CD8-positive, alpha-beta T cell (primary cell): ENCODE measurements at regions of chr12 and their contacts with region 1.

Region 1: GRCh38 chr12:95318071-95318545 is 100.5 kb downstream of the VEZT start:
- DNase-seq: no peak
- ATAC-seq: no peak
- H3K4me3 ChIP-seq: no peak overlapping the region
- H3K4me3 Mint-ChIP-seq: no peak overlapping the region
- H3K27ac ChIP-seq: no peak overlapping the region
- H3K27ac Mint-ChIP-seq: no peak overlapping the region
- H3K4me1 ChIP-seq: no peaks in the 10 kb centered on the region
- H3K4me1 Mint-ChIP-seq: no peaks in the 10 kb centered on the region
- H3K27me3 ChIP-seq: no peaks in the 10 kb centered on the region
- H3K27me3 Mint-ChIP-seq: peaks cover 10% of the 10 kb centered on the region
- CTCF ChIP-seq: no peak

Region 2: DNA sequence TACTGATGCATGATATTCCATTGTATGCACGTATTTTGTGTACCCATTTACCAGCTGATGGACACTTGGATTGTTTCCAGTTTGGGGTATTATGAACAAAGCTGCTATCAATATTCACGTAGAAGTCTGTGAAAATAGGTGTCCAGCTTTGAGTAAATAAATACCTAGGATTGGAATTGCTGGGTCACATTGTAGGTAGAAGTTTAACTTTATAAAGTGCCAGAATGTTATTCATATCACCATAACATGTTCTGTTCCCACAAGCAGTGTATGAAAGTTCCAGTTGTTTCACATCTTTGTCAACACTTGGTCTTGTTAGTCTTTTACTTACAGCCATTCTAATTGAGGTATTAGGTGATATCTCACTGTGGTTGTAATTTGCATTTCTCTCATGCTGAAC is 47.8 kb after region 1 on chr12:
- CTCF ChIA-PET with region 1: no interaction called
- POLR2A ChIA-PET with region 1: no interaction called
- intact Hi-C with region 1: loop called in 1 of 2 experiments (anchors 2 kb)
- DNase-seq: no peak
- ATAC-seq: no peak
- H3K4me3 ChIP-seq: no peak overlapping the region
- H3K4me3 Mint-ChIP-seq: no peak overlapping the region
- H3K27ac ChIP-seq: no peak overlapping the region
- H3K27ac Mint-ChIP-seq: no peak overlapping the region
- H3K4me1 ChIP-seq: no peaks in the 10 kb centered on the region
- H3K4me1 Mint-ChIP-seq: no peaks in the 10 kb centered on the region
- H3K27me3 ChIP-seq: no peaks in the 10 kb centered on the region
- H3K27me3 Mint-ChIP-seq: peaks cover 3% of the 10 kb centered on the region
- CTCF ChIP-seq: no peak

Region 3: DNA sequence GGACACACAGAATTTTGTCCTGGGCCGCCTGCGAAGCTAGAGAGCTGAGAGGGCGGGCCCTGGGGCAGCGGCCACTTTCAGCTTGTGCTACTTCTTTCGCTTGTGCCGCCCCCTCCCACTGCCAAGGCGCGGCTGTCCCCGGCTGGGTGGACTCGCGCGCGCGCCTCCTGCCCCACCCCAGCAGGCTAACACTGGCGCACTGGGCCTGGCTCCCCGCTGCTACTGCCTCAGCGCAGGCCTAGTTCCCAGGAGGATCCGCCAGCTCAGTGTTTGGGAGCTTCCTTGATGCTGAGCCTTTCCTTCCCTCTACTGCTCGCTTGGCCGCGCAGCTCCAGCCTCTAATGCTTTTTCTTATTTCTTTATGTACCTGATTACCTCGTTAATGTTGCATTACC is 128.4 kb after region 1 on chr12:
- CTCF ChIA-PET with region 1: no interaction called
- POLR2A ChIA-PET with region 1: no interaction called
- intact Hi-C with region 1: no loop called
- DNase-seq: no peak
- ATAC-seq: no peak
- H3K4me3 ChIP-seq: no peak overlapping the region
- H3K4me3 Mint-ChIP-seq: no peak overlapping the region
- H3K27ac ChIP-seq: no peak overlapping the region
- H3K27ac Mint-ChIP-seq: no peak overlapping the region
- H3K4me1 ChIP-seq: no peaks in the 10 kb centered on the region
- H3K4me1 Mint-ChIP-seq: no peaks in the 10 kb centered on the region
- H3K27me3 ChIP-seq: peaks cover 0 to 6% of the 10 kb centered on the region in 2 experiments
- H3K27me3 Mint-ChIP-seq: peaks cover 20% of the 10 kb centered on the region
- CTCF ChIP-seq: no peak